ENCODE measurements at regions of chr17 and their contacts with region 1.

Region 1: GRCh38 chr17:34673995-34674870 is 94.9 kb downstream of the TMEM132E start:
- DNase-seq: no peak
- ATAC-seq: no peak
- H3K4me3 ChIP-seq: no peak overlapping the region
- H3K27ac ChIP-seq: no peak overlapping the region
- H3K4me1 ChIP-seq: no peaks in the 10 kb centered on the region
- H3K27me3 ChIP-seq: peaks cover 0 to 4% (median 0%) of the 10 kb centered on the region in 9 donors
- CTCF ChIP-seq: no peak
- POLR2A ChIP-seq: no peak

Region 2: GRCh38 chr17:34606763-34607162 is 67.5 kb before region 1 on chr17:
- intact Hi-C with region 1: loop called in 1 of 10 experiments (anchors 10 kb)
- DNase-seq: no peak
- ATAC-seq: no peak
- H3K4me3 ChIP-seq: no peak overlapping the region
- H3K27ac ChIP-seq: no peak overlapping the region
- H3K4me1 ChIP-seq: no peaks in the 10 kb centered on the region
- H3K27me3 ChIP-seq: peaks cover 0 to 46% (median 18%) of the 10 kb centered on the region in 9 donors
- CTCF ChIP-seq: no peak
- POLR2A ChIP-seq: no peak

Region 3: DNA sequence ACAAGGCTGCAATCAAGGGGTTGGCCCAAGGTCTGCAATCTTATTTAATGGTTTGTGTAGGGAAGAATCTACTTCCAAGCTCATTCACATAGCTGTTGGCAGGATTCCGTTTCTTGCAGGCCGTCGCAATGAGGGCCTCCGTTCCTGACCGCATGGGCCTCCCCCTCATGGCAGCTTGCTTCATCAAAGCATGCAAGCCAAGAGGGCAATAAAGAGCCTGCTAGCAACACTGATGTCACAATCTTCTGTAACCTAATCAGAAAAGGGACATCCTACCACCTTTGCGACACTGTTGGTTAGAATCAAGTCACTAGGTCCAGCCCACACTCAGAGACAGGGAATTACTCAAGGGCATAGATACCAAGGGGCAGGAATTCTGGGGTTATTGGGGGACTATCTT is 191.5 kb after region 1 on chr17:
- intact Hi-C with region 1: loop called in 1 of 10 experiments (anchors 10 kb)
- DNase-seq: no peak
- ATAC-seq: no peak
- H3K4me3 ChIP-seq: no peak overlapping the region
- H3K27ac ChIP-seq: no peak overlapping the region
- H3K4me1 ChIP-seq: no peaks in the 10 kb centered on the region
- H3K27me3 ChIP-seq: peaks cover 0 to 10% (median 0%) of the 10 kb centered on the region in 9 donors
- CTCF ChIP-seq: no peak
- POLR2A ChIP-seq: no peak

Measured in heart left ventricle (tissue), 16 donors.